ENCODE measurements at regions of chr18 and their contacts with region 1.

Region 1: DNA sequence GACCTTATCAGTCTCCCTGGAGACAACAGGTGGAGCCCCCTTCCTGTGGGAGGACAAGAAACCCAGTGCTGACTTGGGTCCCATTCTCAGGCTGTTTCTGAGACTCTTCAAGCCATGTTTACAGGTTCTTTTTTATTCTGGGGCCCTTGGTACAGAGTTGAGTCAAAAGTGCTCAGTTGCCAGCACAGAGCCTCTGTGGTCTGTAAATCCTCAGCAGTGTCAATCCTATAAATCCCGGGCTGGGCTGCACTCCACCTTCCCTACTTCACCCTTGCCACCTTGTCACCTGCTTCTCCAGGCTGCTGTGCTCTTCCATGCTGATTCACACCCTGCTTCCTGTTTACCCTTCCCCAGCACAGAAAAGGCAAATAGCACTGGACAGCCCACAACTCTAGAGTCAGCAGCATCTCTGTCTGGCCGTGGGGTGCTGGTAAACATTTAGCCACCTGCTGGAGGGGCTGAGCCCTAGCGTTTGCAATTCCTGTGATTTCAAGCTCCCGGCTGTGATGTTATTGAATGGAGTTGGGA is 74.7 kb downstream of the TNFRSF11A start:
- DNase-seq: peak; percentile 93
- ATAC-seq: peak; percentile 97
- H3K4me3 ChIP-seq: no peak overlapping the region
- H3K27ac ChIP-seq: peak overlapping the region; percentile 87
- H3K4me1 ChIP-seq: peaks cover 30% of the 10 kb centered on the region
- H3K27me3 ChIP-seq: no peaks in the 10 kb centered on the region
- CTCF ChIP-seq: peak; percentile 78

Region 2: DNA sequence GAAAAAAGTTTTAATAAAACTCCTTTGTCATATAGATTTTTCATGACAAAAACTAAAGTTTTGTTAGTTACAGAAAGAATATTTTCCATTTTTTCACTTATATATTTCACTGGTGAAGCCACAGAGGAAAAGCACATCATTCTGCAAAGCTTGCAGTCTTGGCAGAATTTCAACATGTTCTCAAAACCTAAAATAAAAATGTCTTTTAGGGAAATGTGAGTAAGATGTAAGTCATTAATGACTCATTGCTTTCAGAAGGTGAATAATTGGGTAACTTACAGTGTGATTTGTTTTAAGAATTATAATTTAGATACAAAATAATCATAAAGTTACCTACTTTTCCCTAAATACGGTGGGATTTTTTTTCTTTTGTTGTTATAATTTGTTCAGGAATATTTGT is 118.2 kb before region 1 on chr18:
- CTCF ChIA-PET with region 1: no interaction called
- POLR2A ChIA-PET with region 1: no interaction called
- intact Hi-C with region 1: loop called (anchors 5 kb)
- DNase-seq: peak; percentile 90
- ATAC-seq: peak; percentile 68
- H3K4me3 ChIP-seq: peak overlapping the region; percentile 37; the same call in 1 of the 2 replicates
- H3K27ac ChIP-seq: peak overlapping the region; percentile 85
- H3K4me1 ChIP-seq: peaks cover 29% of the 10 kb centered on the region
- H3K27me3 ChIP-seq: no peaks in the 10 kb centered on the region
- CTCF ChIP-seq: no peak

Region 3: DNA sequence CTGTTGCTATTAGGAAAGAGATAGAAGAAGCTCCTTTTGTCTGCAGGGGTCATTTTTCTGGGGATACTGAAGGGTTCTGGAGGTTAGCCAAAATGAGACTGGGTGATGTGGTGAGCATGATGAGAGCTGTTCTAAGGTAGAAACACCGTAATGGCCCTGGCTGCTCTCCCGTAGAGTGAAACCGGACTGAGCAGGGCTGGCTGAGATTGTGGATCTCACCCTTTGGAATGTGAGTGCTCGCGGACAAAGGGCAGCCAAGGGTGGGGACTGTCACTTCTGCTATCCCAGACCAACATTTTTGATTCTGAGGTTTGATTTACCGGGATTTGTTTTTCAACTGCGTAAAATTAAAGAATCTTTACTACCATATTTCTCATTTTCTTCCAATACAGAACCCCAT is 38.6 kb before region 1 on chr18:
- CTCF ChIA-PET with region 1: no interaction called
- POLR2A ChIA-PET with region 1: no interaction called
- intact Hi-C with region 1: no loop called
- DNase-seq: no peak
- ATAC-seq: no peak
- H3K4me3 ChIP-seq: no peak overlapping the region
- H3K27ac ChIP-seq: no peak overlapping the region
- H3K4me1 ChIP-seq: no peaks in the 10 kb centered on the region
- H3K27me3 ChIP-seq: no peaks in the 10 kb centered on the region
- CTCF ChIP-seq: no peak

Region 4: DNA sequence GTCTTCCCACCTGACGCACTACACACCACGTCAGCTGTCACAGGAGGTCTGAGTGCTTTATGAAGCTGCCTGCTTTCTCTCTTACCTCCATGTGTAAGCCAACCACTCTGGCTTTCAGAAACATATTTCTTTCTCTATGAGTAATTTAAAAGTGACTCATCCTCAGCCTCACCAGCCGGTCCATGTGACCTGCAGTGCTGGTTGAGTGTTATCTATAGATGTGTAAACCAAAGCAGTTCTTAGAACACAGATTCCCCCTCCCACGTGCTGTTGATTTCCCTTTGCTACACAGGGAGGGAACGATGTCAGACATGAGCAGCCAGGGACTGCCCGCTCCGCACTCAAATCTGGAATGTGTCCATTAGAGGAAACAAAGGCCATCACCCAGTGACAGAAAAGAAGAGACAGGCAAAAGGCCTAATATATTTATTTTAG is 761.9 kb after region 1 on chr18:
- CTCF ChIA-PET with region 1: no interaction called
- POLR2A ChIA-PET with region 1: no interaction called
- intact Hi-C with region 1: no loop called
- DNase-seq: peak; percentile 80
- ATAC-seq: peak; percentile 99
- H3K4me3 ChIP-seq: no peak overlapping the region
- H3K27ac ChIP-seq: 0 out of 2 replicates have a peak overlapping the region, but pooled peaks have one; percentile 17
- H3K4me1 ChIP-seq: peaks cover 13% of the 10 kb centered on the region
- H3K27me3 ChIP-seq: 0 out of 2 replicates have a peak, but pooled peaks cover under 1% of the 10 kb centered on the region
- CTCF ChIP-seq: no peak

Measured in PC-3 (cell line).